ENCODE measurements at regions of chr13 and their contacts with region 1.

Region 1: DNA sequence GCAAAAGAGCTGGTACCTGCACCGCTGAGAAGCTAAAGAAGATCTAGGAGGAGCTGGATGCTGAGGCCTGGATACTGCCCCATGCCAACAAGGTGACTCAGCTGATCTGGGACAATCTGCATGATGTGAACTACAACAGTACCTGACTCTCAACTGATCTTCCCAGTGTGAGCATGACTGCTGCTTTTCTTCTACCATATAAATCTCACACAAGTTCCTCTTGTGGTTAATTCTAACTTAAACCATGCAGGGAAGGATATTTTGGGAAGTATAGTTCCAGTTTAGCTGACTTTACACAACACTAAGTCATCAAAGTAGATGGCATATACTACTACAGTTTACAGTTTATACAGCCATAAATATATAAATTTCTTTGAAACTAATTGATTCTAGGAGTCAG is 91.9 kb downstream of the SLAIN1 start:
- DNase-seq: no peak
- H3K4me3 ChIP-seq: no peak overlapping the region
- H3K27ac ChIP-seq: no peak overlapping the region
- H3K4me1 ChIP-seq: no peaks in the 10 kb centered on the region
- H3K27me3 ChIP-seq: no peaks in the 10 kb centered on the region
- CTCF ChIP-seq: no peak
- POLR2A ChIP-seq: no peak

Region 2: DNA sequence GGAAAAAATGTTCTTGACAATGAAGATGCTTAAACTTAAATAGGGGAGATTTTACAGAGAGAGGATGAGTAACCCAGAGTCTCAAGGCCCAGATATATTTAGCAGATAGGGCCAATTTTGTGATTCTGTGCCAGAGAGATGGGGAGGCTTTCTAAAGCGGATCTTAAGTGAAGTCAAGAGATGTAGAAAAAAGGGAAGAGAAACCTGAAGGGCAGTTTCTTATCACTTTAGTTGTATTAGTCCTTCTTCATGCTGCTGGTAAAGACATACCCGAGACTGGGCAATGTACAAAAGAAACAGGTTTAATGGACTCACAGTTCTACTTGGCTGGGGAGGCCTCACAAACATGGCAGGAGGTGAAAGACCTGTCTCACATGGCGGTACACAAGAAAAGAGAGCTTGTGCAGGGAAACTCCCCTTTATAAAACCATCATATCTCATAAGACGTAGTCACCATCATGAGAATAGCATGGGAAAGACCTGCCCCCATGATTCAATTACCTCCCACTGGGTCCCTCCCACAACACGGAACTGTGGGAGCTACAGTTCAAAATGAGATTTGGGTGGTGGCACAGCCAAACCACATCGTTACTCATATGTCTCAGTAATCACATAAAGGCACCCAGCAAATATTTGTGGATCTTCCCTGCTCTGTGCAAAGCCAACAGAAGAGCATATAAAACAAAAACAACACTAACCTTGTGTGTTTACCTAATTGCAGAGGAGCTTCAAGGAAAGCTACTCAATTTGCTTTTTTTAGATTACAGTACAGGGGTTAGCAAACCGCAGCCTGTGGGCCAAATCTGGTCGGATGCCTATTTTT is 359.8 kb before region 1 on chr13:
- intact Hi-C with region 1: no loop called
- DNase-seq: peak; percentile 53
- H3K4me3 ChIP-seq: no peak overlapping the region
- H3K27ac ChIP-seq: no peak overlapping the region
- H3K4me1 ChIP-seq: no peaks in the 10 kb centered on the region
- H3K27me3 ChIP-seq: no peaks in the 10 kb centered on the region
- CTCF ChIP-seq: no peak
- POLR2A ChIP-seq: no peak

Region 3: DNA sequence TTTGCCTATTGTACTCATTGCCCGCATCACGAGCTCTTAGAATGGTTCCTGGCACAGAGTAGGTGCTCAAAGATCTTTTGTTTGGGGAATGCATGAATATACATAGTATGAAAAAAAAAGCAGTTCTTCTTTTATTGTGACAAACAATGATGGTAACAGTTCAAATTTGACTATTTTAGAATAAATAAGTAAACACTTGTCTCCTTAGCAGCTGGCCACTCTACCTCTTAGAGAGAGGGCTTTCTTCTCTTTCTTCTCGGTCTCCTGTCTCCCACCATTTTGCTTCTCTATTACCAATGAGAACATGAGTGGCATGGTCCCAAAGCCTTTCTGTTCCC is 92.5 kb before region 1 on chr13:
- intact Hi-C with region 1: no loop called
- DNase-seq: no peak
- H3K4me3 ChIP-seq: peak overlapping the region; percentile 73 to 83
- H3K27ac ChIP-seq: peak overlapping the region; percentile 69 to 75
- H3K4me1 ChIP-seq: no peaks in the 10 kb centered on the region
- H3K27me3 ChIP-seq: no peaks in the 10 kb centered on the region
- CTCF ChIP-seq: no peak
- POLR2A ChIP-seq: no peak

Region 4: GRCh38 chr13:77918391-77919245 is 129.2 kb after region 1 on chr13 and contains the start of gene EDNRB:
- intact Hi-C with region 1: loop called (anchors 5 kb)
- DNase-seq: peak; percentile 12
- H3K4me3 ChIP-seq: peak within 1 kb of the TSS; percentile 31 to 39
- H3K27ac ChIP-seq: peak within 1 kb of the TSS; percentile 27 to 41
- H3K4me1 ChIP-seq: no peaks in the 10 kb centered on the region
- H3K27me3 ChIP-seq: no peaks in the 10 kb centered on the region
- CTCF ChIP-seq: no peak
- POLR2A ChIP-seq: no peak
- total RNA-seq, gene EDNRB: 14.8 to 18.9 TPM

Measured in prostate gland (tissue), 2 donors.